OCI-LY7 (cell line): ENCODE measurements at regions of chr21 and their contacts with region 1.

Region 1: DNA sequence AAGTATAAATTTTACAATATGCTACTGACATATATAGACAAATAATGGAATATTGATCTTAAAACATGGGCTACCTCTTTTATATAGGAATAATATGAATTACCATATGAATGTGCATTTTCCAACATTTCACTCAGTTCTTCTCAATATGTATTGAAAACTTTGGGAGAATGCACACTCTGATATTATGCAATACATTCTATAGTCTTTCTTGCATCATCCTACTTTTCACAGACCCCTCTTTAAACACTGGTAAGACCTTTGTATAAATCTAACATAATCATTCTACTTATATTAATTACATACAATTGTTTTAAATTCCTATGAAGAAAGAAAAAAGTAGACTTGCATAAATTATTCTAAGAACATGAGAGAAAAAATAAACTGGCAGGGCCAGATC is 69.2 kb downstream of the NCAM2 start:
- DNase-seq: no peak
- H3K4me3 ChIP-seq: no peak overlapping the region
- H3K27ac ChIP-seq: no peak overlapping the region
- H3K4me1 ChIP-seq: no peaks in the 10 kb centered on the region
- CTCF ChIP-seq: no peak

Region 2: DNA sequence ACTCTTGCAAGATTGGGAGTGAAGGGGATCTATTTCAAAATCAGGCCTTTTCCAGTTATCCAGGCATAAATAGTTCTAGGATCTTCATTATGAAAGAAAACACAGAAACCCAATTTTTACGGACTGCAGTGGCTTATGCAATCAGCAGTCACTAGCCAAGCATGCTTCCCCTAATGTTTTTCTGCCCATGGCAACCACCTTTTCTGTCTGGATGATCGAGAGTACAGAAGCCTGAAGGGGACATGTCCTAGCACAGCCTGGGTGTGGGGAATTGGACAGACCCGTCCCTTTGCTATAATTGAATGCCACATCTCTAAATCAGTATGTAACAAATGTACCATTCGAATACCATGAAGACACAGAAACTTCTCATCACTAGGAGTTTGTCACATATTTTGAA is 99.0 kb before region 1 on chr21:
- CTCF ChIA-PET with region 1: no interaction called
- POLR2A ChIA-PET with region 1: interaction called, 10 read pairs
- intact Hi-C with region 1: no loop called
- DNase-seq: no peak
- H3K4me3 ChIP-seq: no peak overlapping the region
- H3K27ac ChIP-seq: no peak overlapping the region
- H3K4me1 ChIP-seq: no peaks in the 10 kb centered on the region
- CTCF ChIP-seq: no peak

Region 3: DNA sequence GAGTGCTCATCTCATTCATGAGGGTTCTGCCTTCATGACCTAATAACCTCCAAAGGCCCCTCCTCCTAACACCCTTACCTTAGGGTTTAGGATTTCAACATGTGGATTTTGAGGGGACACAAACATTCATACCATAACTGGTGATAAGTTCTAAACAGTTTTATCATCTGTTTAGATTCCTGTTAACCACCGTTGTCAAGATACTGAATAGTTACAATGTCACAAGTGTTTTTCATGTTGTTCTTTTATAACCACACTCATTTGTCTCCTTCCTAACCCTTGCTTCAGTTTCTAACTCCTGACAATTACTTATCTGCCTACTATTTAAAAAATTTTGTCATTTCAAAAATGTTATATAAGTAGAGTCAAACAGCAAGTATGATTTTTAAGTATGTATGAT is 16.8 kb after region 1 on chr21:
- CTCF ChIA-PET with region 1: no interaction called
- POLR2A ChIA-PET with region 1: no interaction called
- intact Hi-C with region 1: no loop called
- DNase-seq: no peak
- H3K4me3 ChIP-seq: no peak overlapping the region
- H3K27ac ChIP-seq: no peak overlapping the region
- H3K4me1 ChIP-seq: no peaks in the 10 kb centered on the region
- CTCF ChIP-seq: no peak